B cell (primary cell): ENCODE measurements at regions of chr9 and their contacts with region 1.

Region 1: DNA sequence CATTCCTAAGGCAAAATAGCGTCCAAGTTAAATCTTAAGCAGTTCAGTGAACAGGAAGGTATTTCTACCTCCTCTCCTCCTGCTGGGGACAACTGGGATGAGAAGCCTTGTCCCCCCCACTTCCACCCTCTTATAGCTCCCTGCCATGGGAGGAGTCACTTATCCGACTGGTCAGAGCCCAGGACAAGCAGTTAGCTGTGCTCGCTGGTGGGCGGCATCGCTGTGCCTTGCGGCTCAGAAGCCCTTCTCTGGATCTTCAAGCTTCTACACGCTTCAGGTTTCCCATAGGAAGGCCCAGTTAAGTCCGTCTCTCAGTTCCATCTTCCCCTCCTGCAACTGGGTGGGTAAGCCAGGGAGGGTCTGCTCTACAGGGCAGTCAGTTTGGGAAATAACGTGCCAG is 77.2 kb downstream of the PAX5 start:
- DNase-seq: no peak
- ATAC-seq: no peak
- H3K4me3 ChIP-seq: no peak overlapping the region
- H3K4me3 Mint-ChIP-seq: no peak overlapping the region
- H3K27ac ChIP-seq: peak overlapping the region in 1 of 2 donors; percentile 65
- H3K27ac Mint-ChIP-seq: peak overlapping the region; percentile 74
- H3K4me1 ChIP-seq: peaks cover 0 to 5% of the 10 kb centered on the region in 2 donors
- H3K4me1 Mint-ChIP-seq: peaks cover 61% of the 10 kb centered on the region
- H3K27me3 ChIP-seq: no peaks in the 10 kb centered on the region
- H3K27me3 Mint-ChIP-seq: no peaks in the 10 kb centered on the region
- CTCF ChIP-seq: no peak

Region 2: GRCh38 chr9:36903541-36904435 is 53.1 kb before region 1 on chr9:
- CTCF ChIA-PET with region 1: interaction called, 3 read pairs
- POLR2A ChIA-PET with region 1: no interaction called
- intact Hi-C with region 1: loop called (anchors 10 kb)
- DNase-seq: no peak
- ATAC-seq: peak; percentile 41
- H3K4me3 ChIP-seq: no peak overlapping the region
- H3K4me3 Mint-ChIP-seq: no peak overlapping the region
- H3K27ac ChIP-seq: peak overlapping the region in 1 of 2 donors; percentile 52
- H3K27ac Mint-ChIP-seq: peak overlapping the region; percentile 78
- H3K4me1 ChIP-seq: peaks cover 0 to 25% of the 10 kb centered on the region in 2 donors
- H3K4me1 Mint-ChIP-seq: peaks cover 50% of the 10 kb centered on the region
- H3K27me3 ChIP-seq: no peaks in the 10 kb centered on the region
- H3K27me3 Mint-ChIP-seq: no peaks in the 10 kb centered on the region
- CTCF ChIP-seq: no peak